ENCODE measurements at regions of chr2 and their contacts with region 1.

Region 1: DNA sequence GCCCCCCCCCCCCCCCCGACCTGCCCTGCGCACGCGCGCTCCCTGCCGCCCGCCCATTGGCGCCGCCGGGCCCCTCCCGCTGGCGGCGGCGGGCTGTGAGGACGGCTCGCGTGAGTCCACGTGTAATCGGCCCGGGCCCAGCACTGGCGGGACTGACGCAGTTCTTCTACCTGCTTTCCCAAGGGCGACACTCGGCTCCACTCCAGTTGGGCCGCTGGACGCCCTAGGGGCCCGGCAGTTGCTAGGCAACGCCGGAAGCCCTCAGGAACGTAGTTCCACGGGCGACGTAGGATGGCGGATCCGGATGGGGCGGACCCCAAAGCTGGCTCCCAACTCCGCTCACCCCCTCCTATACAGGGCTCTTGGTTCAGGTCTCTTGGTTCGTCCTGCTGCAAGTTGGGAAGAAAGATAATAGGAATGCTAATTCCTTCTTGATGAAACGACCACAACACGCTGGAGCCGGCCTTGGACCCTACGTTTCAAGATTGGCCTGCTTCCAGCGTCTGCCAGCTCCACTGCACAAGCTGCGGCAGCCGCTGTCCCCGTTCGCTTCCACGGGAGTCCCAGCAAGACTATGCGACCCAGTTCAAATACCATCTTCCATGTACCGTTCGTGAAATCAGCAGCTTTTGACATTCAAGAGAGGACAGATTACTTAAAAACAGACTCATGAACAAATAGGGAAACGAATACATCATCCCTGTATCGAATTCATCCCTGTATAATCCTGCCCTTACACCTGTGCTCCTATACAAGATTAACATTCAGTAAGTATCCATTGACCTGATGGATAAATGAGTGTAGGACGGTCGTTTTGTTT is 415 bp upstream of the MCFD2 start:
- DNase-seq: peak; percentile 70 to 83 (median 77)
- H3K4me3 ChIP-seq: peak overlapping the region; percentile 80 to 97 (median 91)
- H3K4me3 Mint-ChIP-seq: peak overlapping the region; percentile 91 to 99
- H3K27ac ChIP-seq: peak overlapping the region; percentile 26 to 77
- H3K27ac Mint-ChIP-seq: peak overlapping the region; percentile 83 to 93 (median 88)
- H3K4me1 ChIP-seq: peaks cover 25 to 28% of the 10 kb centered on the region in 2 donors
- H3K4me1 Mint-ChIP-seq: peaks cover 36% of the 10 kb centered on the region
- H3K27me3 ChIP-seq: no peaks in the 10 kb centered on the region
- H3K27me3 Mint-ChIP-seq: peaks cover 0 to 2% (median 1%) of the 10 kb centered on the region in 3 donors
- CTCF ChIP-seq: no peak

Region 2: DNA sequence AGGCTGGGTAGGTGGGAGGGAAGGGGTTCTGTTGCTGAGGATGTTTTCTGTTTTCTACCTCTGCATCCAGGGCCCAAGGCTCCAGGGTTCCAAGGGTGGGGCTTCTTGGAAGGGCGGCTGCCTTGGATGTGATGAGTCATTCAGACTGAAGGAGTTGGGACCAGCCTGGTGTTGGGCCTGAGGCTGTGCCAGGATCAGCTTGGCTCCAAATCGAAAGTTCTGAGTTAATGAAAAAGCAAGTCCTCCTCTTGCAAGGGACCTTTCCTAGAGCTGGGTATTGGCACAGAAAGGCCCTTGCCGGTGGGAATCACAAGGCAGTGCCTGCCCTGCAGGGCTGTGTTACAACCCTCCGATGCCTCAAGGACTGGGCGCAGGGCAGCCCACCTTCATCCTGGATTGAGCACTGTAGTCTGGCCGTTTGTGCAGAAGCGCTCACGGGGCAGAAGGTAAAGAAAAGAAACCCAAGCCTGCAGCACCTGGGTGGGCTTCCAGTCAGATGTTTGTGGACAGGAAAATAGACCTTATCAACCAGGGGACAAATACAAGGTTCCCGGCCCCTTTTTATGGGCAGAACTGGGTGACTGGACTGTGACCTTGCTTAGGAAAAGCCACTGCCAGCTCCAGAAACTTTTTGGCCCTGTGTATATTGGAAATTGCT is 52.1 kb after region 1 on chr2:
- intact Hi-C with region 1: no loop called
- DNase-seq: peak; percentile 57 to 80 (median 76)
- H3K4me3 ChIP-seq: peak overlapping the region in 1 of 3 experiments; percentile 43
- H3K4me3 Mint-ChIP-seq: peak overlapping the region; percentile 62 to 68
- H3K27ac ChIP-seq: peak overlapping the region; percentile 97 to 98
- H3K27ac Mint-ChIP-seq: peak overlapping the region; percentile 96 to 100 (median 99)
- H3K4me1 ChIP-seq: peaks cover 92 to 99% of the 10 kb centered on the region in 2 donors
- H3K4me1 Mint-ChIP-seq: peaks cover 94% of the 10 kb centered on the region
- H3K27me3 ChIP-seq: no peaks in the 10 kb centered on the region
- H3K27me3 Mint-ChIP-seq: no peaks in the 10 kb centered on the region
- CTCF ChIP-seq: no peak

Region 3: DNA sequence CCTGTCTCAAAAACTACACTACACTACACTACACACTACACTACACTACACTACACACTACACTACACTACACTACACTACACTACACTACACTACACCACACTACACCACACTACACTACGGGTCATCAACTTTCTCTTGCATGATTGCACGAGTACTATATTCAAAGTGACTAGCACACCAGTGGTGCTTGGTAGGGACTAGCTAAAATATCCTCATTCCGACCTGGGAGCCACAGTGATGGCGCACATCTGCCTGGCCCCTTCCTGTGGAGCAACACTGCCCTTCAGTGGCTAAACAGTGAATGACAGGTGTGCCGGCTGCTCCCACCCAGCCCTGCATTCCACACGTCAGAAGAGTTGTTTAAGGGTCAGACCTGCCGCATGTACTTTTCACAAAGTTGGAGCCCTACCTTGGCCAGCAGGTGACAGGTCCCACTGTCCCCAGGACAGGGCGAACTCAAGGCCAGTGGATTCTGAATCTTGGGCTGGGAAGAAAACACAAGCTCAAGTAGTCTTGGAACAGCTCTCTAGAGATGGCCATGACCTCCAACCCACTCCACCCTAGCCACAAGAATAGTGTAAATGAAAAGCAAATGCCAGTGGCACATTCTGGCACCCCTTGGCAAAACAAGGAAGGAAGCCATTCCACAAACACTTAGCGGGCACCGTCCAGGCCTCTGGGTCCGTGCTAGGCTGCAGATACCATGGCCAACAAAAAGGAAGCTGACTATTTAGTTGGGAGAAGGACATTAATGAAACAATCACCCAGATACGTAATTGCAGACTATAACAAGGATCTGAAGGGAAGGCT is 407.2 kb after region 1 on chr2:
- intact Hi-C with region 1: loop called in 1 of 2 experiments (anchors 5 kb)
- DNase-seq: peak; percentile 66 to 80 (median 73)
- H3K4me3 ChIP-seq: no peak overlapping the region
- H3K4me3 Mint-ChIP-seq: no peak overlapping the region
- H3K27ac ChIP-seq: peak overlapping the region in 1 of 2 donors; percentile 1
- H3K27ac Mint-ChIP-seq: no peak overlapping the region
- H3K4me1 ChIP-seq: peaks cover 0 to 8% of the 10 kb centered on the region in 2 donors
- H3K4me1 Mint-ChIP-seq: no peaks in the 10 kb centered on the region
- H3K27me3 ChIP-seq: no peaks in the 10 kb centered on the region
- H3K27me3 Mint-ChIP-seq: peaks cover 0 to 3% (median 3%) of the 10 kb centered on the region in 3 donors
- CTCF ChIP-seq: peak; percentile 97